ENCODE measurements at regions of chr3 and their contacts with region 1.

Region 1: DNA sequence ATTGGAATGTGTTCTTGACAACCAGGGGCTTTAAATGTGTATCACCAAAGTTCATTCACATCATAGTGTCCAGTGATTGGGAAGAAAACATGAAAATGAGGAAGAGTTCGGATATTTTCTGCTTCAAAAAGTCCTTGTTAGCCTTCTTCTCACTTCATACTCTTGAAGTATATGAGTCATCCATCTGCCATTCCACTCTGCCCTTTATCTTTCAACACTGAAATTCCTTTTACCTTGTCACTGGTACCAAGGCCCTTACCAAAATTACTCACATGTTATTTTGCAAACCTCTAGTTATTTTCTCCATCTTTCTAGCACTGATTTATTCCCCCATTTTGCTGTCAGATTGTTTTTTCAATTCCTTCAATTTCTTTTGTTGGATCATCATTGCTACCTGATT is 32.5 kb downstream of the OR5H15 start:
- DNase-seq: no peak
- ATAC-seq: no peak
- H3K4me3 Mint-ChIP-seq: no peak overlapping the region
- H3K27ac Mint-ChIP-seq: no peak overlapping the region
- H3K4me1 Mint-ChIP-seq: no peaks in the 10 kb centered on the region
- H3K27me3 Mint-ChIP-seq: peaks cover 1% of the 10 kb centered on the region

Region 2: GRCh38 chr3:98166396-98166795 is 32.6 kb before region 1 on chr3 and contains the start of gene OR5H15:
- CTCF ChIA-PET with region 1: no interaction called
- POLR2A ChIA-PET with region 1: no interaction called
- intact Hi-C with region 1: loop called in 1 of 2 experiments (anchors 1 kb)
- DNase-seq: no peak
- ATAC-seq: no peak
- H3K4me3 Mint-ChIP-seq: no peak within 1 kb of the TSS
- H3K27ac Mint-ChIP-seq: no peak within 1 kb of the TSS
- H3K4me1 Mint-ChIP-seq: no peaks in the 10 kb centered on the region
- H3K27me3 Mint-ChIP-seq: peaks cover 4% of the 10 kb centered on the region
- total RNA-seq, gene OR5H15: not detected

Measured in activated CD4-positive, alpha-beta T cell treated with anti-CD3 and anti-CD28 coated beads for 36 hours (primary cell).